CD14-positive monocyte (primary cell): ENCODE measurements at regions of chr9 and their contacts with region 1.

Region 1: GRCh38 chr9:75200892-75201470 is 112.7 kb downstream of the OSTF1 start:
- DNase-seq: peak; percentile 9 to 51 (median 26)
- H3K4me3 ChIP-seq: no peak overlapping the region
- H3K4me3 Mint-ChIP-seq: no peak overlapping the region
- H3K27ac ChIP-seq: no peak overlapping the region
- H3K27ac Mint-ChIP-seq: peak overlapping the region in 1 of 7 donors; percentile 1
- H3K4me1 ChIP-seq: no peaks in the 10 kb centered on the region
- H3K4me1 Mint-ChIP-seq: no peaks in the 10 kb centered on the region
- H3K27me3 ChIP-seq: no peaks in the 10 kb centered on the region
- H3K27me3 Mint-ChIP-seq: peaks cover 0 to 2% (median 0%) of the 10 kb centered on the region in 3 donors
- CTCF ChIP-seq: peak; percentile 79

Region 2: GRCh38 chr9:74711341-74711740 is 489.6 kb before region 1 on chr9:
- intact Hi-C with region 1: no loop called
- DNase-seq: no peak
- H3K4me3 ChIP-seq: no peak overlapping the region
- H3K4me3 Mint-ChIP-seq: no peak overlapping the region
- H3K27ac ChIP-seq: no peak overlapping the region
- H3K27ac Mint-ChIP-seq: no peak overlapping the region
- H3K4me1 ChIP-seq: no peaks in the 10 kb centered on the region
- H3K4me1 Mint-ChIP-seq: no peaks in the 10 kb centered on the region
- H3K27me3 ChIP-seq: no peaks in the 10 kb centered on the region
- H3K27me3 Mint-ChIP-seq: no peaks in the 10 kb centered on the region
- CTCF ChIP-seq: no peak

Region 3: GRCh38 chr9:76302947-76303940 is 1102.3 kb after region 1 on chr9:
- intact Hi-C with region 1: loop called (anchors 5 kb)
- DNase-seq: peak; percentile 25 to 58 (median 45)
- H3K4me3 ChIP-seq: no peak overlapping the region
- H3K4me3 Mint-ChIP-seq: no peak overlapping the region
- H3K27ac ChIP-seq: no peak overlapping the region
- H3K27ac Mint-ChIP-seq: no peak overlapping the region
- H3K4me1 ChIP-seq: no peaks in the 10 kb centered on the region
- H3K4me1 Mint-ChIP-seq: no peaks in the 10 kb centered on the region
- H3K27me3 ChIP-seq: no peaks in the 10 kb centered on the region
- H3K27me3 Mint-ChIP-seq: peaks cover 0 to 3% (median 0%) of the 10 kb centered on the region in 3 donors
- CTCF ChIP-seq: peak; percentile 75